ENCODE measurements at regions of chr2 and their contacts with region 1.

Region 1: GRCh38 chr2:62456721-62457539 is 49.1 kb downstream of the TMEM17 start:
- DNase-seq: peak; percentile 79
- ATAC-seq: peak; percentile 94 to 97
- H3K4me3 ChIP-seq: peak overlapping the region; percentile 67
- H3K27ac ChIP-seq: peak overlapping the region; percentile 78
- H3K4me1 ChIP-seq: no peaks in the 10 kb centered on the region
- H3K27me3 ChIP-seq: no peaks in the 10 kb centered on the region
- CTCF ChIP-seq: peak; percentile 96

Region 2: DNA sequence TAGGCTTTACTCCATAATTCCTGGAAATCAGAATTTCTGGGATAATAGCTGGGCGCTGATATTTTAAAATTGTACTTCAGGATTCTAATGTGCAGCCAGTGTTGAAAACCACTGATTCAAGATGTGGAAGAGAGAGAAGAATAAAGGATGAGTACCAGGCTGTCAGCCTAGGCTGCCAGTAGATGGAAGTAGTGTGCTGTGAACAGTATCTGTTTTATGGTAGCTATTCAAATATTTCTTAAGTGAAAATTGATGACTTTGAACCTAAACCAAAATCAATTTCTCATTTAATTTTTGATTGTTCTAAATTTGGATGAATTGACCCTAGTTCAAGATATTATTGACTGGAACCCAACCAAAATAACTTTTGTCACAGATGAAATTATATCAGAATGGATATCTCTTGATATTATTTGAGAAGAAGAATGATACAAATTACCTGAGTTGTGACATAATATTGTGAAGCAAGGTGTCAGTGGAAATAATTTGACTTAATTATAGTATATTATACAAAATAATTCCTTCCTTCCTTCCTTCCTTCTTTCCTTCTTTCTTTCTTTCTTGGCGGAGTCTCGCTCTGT is 463.4 kb before region 1 on chr2:
- intact Hi-C with region 1: no loop called
- DNase-seq: no peak
- ATAC-seq: peak; percentile 70 to 74
- H3K4me3 ChIP-seq: no peak overlapping the region
- H3K27ac ChIP-seq: no peak overlapping the region
- H3K4me1 ChIP-seq: no peaks in the 10 kb centered on the region
- H3K27me3 ChIP-seq: no peaks in the 10 kb centered on the region
- CTCF ChIP-seq: peak; percentile 64

Region 3: DNA sequence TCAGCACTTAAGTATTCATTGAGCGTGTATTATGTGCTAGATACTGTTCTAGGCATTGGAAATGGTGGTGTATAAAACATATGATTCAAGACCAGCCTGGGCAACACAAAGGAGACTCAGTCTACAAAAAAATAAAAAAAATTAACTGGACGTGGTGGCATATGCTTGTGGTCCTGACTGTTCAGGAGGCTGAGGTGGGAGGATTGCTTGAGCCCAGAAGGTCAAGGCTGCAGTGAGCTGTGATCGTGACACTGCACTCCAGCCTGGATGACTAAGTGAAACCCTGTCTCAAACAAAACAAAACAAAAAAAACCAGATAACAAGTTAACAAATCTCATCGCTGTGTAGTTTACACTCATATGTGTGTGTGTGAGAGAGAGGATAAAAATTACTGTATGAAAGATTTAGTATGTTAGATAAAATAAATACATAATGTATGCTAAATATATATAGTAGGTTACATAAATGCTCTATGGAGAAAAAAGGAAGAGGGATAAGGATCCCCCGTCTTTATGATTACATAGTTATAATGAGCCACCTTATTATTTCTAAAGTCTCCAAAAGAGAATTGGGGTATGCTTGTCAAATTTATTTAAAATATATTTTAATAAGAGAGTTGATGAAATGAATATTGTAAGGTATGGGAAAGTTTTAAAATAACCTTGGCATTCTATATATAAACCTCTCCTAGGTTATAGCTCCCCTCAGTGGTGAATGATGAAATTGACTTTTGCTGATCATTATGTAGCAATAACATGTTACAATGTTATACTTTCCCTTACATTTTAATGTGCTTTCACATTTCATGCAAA is 317.8 kb after region 1 on chr2:
- intact Hi-C with region 1: loop called (anchors 2 kb)
- DNase-seq: no peak
- ATAC-seq: peak; percentile 72 to 82
- H3K4me3 ChIP-seq: no peak overlapping the region
- H3K27ac ChIP-seq: no peak overlapping the region
- H3K4me1 ChIP-seq: peaks cover 7% of the 10 kb centered on the region
- H3K27me3 ChIP-seq: no peaks in the 10 kb centered on the region
- CTCF ChIP-seq: peak; percentile 80

Measured in lower lobe of right lung (tissue), 2 donors.